Prostate gland (tissue), 2 donors: ENCODE measurements at regions of chr15 and their contacts with region 1.

Region 1: DNA sequence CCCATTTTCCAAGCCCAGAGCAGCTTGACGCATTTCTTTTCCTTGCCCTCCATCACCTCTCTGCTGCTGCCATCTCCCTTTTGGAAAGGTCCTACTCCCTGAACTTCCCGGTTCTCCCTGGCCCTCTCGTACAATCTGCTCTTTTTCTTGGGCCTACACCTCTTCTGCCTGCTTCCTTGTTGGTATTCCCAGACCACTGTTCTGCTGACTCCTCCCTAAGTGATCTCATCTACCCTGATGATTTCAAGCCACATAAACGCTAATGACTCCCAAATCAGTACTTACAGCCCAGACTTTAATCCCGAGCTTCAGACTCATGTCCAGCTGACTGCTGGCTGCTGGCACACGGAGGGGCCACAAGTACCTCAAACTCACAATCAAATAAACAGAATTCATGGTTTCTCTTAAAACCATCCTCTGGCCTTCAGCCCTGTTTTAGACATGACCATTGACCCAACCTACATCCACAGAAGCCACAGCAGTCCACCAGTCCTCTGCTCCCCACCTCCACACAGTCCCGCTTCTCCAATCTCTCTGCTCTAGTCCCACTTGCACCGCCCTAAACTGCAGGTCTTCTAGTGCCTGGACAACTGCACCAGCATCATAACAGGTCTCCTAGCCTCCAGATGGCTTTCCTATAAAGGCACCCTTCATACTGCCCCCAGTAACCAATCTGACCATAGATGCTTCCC is 57.6 kb downstream of the AAGAB start:
- DNase-seq: no peak
- H3K4me3 ChIP-seq: no peak overlapping the region
- H3K27ac ChIP-seq: no peak overlapping the region
- H3K4me1 ChIP-seq: no peaks in the 10 kb centered on the region
- H3K27me3 ChIP-seq: no peaks in the 10 kb centered on the region
- CTCF ChIP-seq: no peak
- POLR2A ChIP-seq: no peak

Region 2: GRCh38 chr15:66883322-66883911 is 313.4 kb before region 1 on chr15:
- intact Hi-C with region 1: loop called (anchors 10 kb)
- DNase-seq: peak; percentile 77
- H3K4me3 ChIP-seq: no peak overlapping the region
- H3K27ac ChIP-seq: peak overlapping the region in 1 of 2 donors; percentile 12
- H3K4me1 ChIP-seq: no peaks in the 10 kb centered on the region
- H3K27me3 ChIP-seq: no peaks in the 10 kb centered on the region
- CTCF ChIP-seq: no peak
- POLR2A ChIP-seq: no peak